ENCODE measurements at regions of chr14 and their contacts with region 1.

Region 1: GRCh38 chr14:51860164-51860824 is at the start of gene GNG2:
- DNase-seq: peak; percentile 71
- ATAC-seq: peak; percentile 88
- H3K4me3 ChIP-seq: peak within 1 kb of the TSS; percentile 90
- H3K27ac ChIP-seq: peak within 1 kb of the TSS; percentile 82
- H3K4me1 ChIP-seq: peaks cover 12% of the 10 kb centered on the region
- H3K27me3 ChIP-seq: no peaks in the 10 kb centered on the region
- CTCF ChIP-seq: no peak
- EP300 ChIP-seq: no peak
- POLR2A ChIP-seq: peak; percentile 94
- RAD21 ChIP-seq: no peak
- polyA plus RNA-seq, gene GNG2: 31.6 to 42.0 TPM

Region 2: DNA sequence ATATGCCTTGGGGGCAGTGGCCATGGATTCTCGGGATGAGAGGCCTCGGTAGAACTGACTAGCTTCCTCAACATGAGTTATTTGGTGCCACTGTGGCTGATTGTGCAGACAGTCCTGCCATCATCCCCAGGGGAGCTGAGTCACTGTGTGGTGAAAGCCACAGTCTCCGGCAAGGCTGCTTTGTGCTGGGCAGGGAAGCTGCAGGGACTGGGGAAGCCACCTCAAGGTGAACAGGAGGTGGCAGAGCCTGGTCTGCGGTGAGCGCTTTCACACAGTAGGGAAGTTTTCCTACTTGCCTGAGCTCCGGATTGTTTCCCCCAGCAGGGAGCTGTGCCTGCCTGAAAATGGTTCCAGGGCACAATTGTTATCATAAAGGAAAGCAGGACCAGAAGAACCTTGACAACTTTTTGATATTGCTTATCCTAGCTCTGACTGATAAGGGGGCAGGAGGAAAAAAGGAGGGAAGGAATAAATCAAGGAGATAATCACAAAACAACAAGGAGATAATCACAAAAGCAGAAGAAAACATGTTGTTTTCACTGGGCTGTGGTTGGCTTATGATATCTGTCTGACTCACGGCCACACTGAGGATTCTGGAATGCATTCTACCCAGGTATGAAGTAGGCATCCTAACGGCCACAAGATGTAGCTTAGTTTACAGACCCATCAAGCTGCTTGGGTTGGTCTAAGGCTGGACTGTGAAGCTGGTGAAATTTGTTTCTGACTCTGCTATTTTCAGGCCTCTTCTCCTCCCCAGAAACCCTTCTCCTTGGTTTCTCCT is 32.1 kb before region 1 on chr14:
- CTCF ChIA-PET with region 1: no interaction called
- POLR2A ChIA-PET with region 1: no interaction called
- RAD21 ChIA-PET with region 1: interaction called, 19 read pairs
- SMC1A ChIA-PET with region 1: interaction called, 9 read pairs
- in situ Hi-C with region 1: no loop called
- intact Hi-C with region 1: no loop called
- DNase-seq: peak; percentile 74
- ATAC-seq: peak; percentile 99
- H3K4me3 ChIP-seq: no peak overlapping the region
- H3K27ac ChIP-seq: no peak overlapping the region
- H3K4me1 ChIP-seq: no peaks in the 10 kb centered on the region
- H3K27me3 ChIP-seq: no peaks in the 10 kb centered on the region
- CTCF ChIP-seq: peak in 1 of 3 experiments; percentile 26; a peak in 2 of 6 replicates
- EP300 ChIP-seq: peak in 1 of 2 experiments; percentile 17; a peak in 1 of 4 replicates
- POLR2A ChIP-seq: no peak
- RAD21 ChIP-seq: 0 out of 2 replicates have a peak, but pooled peaks have one; percentile 3

Region 3: DNA sequence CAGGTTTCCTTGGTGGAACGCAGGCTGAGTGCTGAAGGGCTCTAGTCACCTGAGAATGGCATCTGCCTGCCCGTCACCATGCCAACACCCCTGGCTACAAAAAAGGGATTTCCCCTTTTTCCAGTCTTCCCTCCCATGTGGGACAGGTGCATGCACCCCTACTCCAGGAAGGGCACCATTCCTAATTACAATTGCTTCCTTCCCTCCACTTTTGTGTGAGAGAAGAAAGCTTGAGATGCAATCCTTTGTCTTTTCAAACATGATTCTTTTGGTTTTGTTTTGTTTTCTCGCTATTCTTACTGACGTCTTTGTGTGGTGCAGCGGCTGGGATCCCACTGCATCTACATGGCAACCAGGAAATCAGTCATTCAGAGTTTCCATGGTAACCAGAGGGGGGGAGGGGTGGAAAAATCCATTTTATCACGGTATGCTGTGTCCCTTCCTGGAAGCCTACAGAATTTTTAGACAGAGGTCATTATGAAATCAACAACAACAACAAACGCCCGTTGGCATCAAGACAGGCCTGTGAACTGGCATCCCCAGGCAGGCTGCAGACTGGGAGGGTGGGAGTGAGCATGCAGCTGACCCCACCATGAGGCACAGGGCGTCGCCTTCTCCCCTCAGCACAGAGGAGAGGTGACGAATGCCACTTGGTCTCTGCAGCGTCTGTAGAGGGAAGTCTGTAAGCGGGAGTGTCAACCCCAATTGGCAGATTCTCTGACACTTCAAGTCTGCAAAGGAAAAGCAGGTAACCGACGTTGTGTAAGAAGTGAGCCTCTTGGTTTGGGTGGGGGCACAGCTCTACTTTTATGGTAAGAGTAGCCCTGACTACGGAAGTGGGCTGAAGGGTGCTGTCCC is 13.4 kb before region 1 on chr14:
- CTCF ChIA-PET with region 1: interaction called, 23 read pairs
- POLR2A ChIA-PET with region 1: interaction called, 41 read pairs
- RAD21 ChIA-PET with region 1: interaction called, 59 read pairs
- SMC1A ChIA-PET with region 1: interaction called, 194 read pairs
- in situ Hi-C with region 1: no loop called
- intact Hi-C with region 1: loop called (anchors 1 kb)
- DNase-seq: peak; percentile 93
- ATAC-seq: peak; percentile 83
- H3K4me3 ChIP-seq: peak overlapping the region; percentile 67
- H3K27ac ChIP-seq: peak overlapping the region; percentile 97
- H3K4me1 ChIP-seq: peaks cover 54% of the 10 kb centered on the region
- H3K27me3 ChIP-seq: no peaks in the 10 kb centered on the region
- CTCF ChIP-seq: no peak
- EP300 ChIP-seq: peak; percentile 75 to 93
- POLR2A ChIP-seq: peak; percentile 87
- RAD21 ChIP-seq: no peak

Region 4: DNA sequence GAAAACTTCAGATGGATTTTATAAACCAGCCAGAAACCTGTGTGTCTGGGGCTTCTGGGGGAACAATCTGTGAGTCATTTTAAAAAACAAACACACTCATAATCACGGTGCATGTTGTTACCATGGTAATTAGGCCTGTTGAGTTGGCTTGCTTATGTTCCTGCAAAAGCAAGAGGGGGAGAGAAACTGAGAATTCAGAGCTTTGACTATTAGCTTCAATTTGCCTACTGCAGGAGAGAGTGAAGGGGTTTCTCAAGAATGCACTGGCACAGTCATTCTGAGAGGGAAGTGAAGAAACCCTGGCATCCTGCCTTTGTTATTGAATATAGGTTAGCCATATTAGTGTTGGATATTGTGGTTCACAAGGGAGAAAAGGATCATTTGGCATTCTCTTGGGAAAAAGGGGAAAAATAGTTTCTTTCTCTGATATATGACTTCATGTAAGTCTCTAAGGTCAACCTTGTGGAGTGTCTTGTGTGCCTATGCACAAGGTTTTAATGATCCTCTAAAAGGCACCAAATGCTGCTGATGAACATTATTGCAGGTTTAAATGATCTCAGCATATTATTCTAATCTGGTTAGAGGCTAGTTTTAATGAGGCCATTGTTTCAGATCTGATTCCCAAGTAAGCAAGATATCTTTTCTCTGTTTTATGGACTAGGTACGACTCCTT is 13.1 kb after region 1 on chr14:
- CTCF ChIA-PET with region 1: interaction called, 7 read pairs
- POLR2A ChIA-PET with region 1: interaction called, 22 read pairs
- RAD21 ChIA-PET with region 1: interaction called, 197 read pairs
- SMC1A ChIA-PET with region 1: interaction called, 254 read pairs
- in situ Hi-C with region 1: no loop called
- intact Hi-C with region 1: no loop called
- DNase-seq: peak; percentile 94
- ATAC-seq: peak; percentile 85
- H3K4me3 ChIP-seq: no peak overlapping the region
- H3K27ac ChIP-seq: peak overlapping the region; percentile 50
- H3K4me1 ChIP-seq: peaks cover 42% of the 10 kb centered on the region
- H3K27me3 ChIP-seq: no peaks in the 10 kb centered on the region
- CTCF ChIP-seq: no peak
- EP300 ChIP-seq: peak; percentile 78 to 81; a peak in 3 of 4 replicates
- POLR2A ChIP-seq: no peak
- RAD21 ChIP-seq: peak; percentile 2; the same call in 1 of the 2 replicates

Region 5: DNA sequence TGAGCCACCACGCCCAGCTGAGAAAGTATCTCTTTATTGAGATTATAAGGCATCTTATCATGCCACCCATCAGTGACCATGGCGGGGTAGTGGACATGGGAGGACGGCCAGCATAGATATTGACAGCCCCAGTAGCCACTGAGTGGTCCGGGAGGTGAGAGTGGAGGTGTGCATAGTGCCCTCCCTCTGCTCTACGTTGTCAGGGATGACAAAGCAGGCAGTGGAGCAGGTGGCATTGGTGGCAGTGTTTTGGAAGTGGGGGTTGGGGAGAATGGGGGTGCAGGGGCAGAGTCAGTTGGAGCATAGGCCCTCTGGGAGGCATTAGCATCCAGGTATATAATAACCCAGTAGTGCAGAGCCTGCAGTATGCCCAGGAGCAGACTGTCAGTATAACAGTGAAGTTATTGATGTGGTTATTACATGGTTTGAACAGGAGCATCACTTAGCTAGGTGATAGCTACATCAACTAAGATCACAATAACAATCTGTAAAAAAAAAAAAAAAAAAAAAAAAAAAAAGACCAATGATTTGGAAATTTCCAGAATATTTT is 41.3 kb after region 1 on chr14:
- CTCF ChIA-PET with region 1: no interaction called
- POLR2A ChIA-PET with region 1: interaction called, 3 read pairs
- RAD21 ChIA-PET with region 1: interaction called, 4 read pairs
- SMC1A ChIA-PET with region 1: interaction called, 11 read pairs
- in situ Hi-C with region 1: no loop called
- intact Hi-C with region 1: no loop called
- DNase-seq: no peak
- ATAC-seq: no peak
- H3K4me3 ChIP-seq: no peak overlapping the region
- H3K27ac ChIP-seq: no peak overlapping the region
- H3K4me1 ChIP-seq: no peaks in the 10 kb centered on the region
- H3K27me3 ChIP-seq: no peaks in the 10 kb centered on the region
- CTCF ChIP-seq: no peak
- EP300 ChIP-seq: no peak
- POLR2A ChIP-seq: no peak
- RAD21 ChIP-seq: no peak

Measured in GM12878 (cell line).